Aorta (tissue), 5 donors: ENCODE measurements at regions of chr3 and their contacts with region 1.

Region 1: GRCh38 chr3:172159962-172160538 is 120.7 kb downstream of the FNDC3B start:
- DNase-seq: peak; percentile 82 to 89
- ATAC-seq: peak; percentile 93
- H3K4me3 ChIP-seq: no peak overlapping the region
- H3K27ac ChIP-seq: peak overlapping the region; percentile 18 to 19
- H3K4me1 ChIP-seq: peaks cover 1 to 16% of the 10 kb centered on the region in 2 donors
- H3K27me3 ChIP-seq: no peaks in the 10 kb centered on the region

Region 2: GRCh38 chr3:172039436-172040077 is 120.5 kb before region 1 on chr3 and contains the start of gene FNDC3B:
- intact Hi-C with region 1: no loop called
- DNase-seq: peak; percentile 96 to 97
- ATAC-seq: peak; percentile 95
- H3K4me3 ChIP-seq: peak within 1 kb of the TSS; percentile 84 to 96
- H3K27ac ChIP-seq: peak within 1 kb of the TSS; percentile 91 to 96
- H3K4me1 ChIP-seq: no peaks in the 10 kb centered on the region
- H3K27me3 ChIP-seq: no peaks in the 10 kb centered on the region
- total RNA-seq, gene FNDC3B: 223 to 239 TPM

Region 3: GRCh38 chr3:172201136-172201869 is 41.3 kb after region 1 on chr3:
- intact Hi-C with region 1: loop called in 1 of 2 experiments (anchors 5 kb)
- DNase-seq: peak; percentile 89 to 90
- ATAC-seq: peak; percentile 72
- H3K4me3 ChIP-seq: no peak overlapping the region
- H3K27ac ChIP-seq: peak overlapping the region; percentile 28 to 98
- H3K4me1 ChIP-seq: peaks cover 13 to 16% of the 10 kb centered on the region in 2 donors
- H3K27me3 ChIP-seq: no peaks in the 10 kb centered on the region